PC-3 (cell line): ENCODE measurements at regions of chr12 and their contacts with region 1.

Region 1: GRCh38 chr12:77724367-77724957 is 106.2 kb upstream of the NAV3 start:
- DNase-seq: peak; percentile 60
- ATAC-seq: peak; percentile 62; the same call in 1 of the 2 replicates
- H3K4me3 ChIP-seq: no peak overlapping the region
- H3K27ac ChIP-seq: no peak overlapping the region
- H3K4me1 ChIP-seq: no peaks in the 10 kb centered on the region
- H3K27me3 ChIP-seq: no peaks in the 10 kb centered on the region
- CTCF ChIP-seq: peak; percentile 84

Region 2: DNA sequence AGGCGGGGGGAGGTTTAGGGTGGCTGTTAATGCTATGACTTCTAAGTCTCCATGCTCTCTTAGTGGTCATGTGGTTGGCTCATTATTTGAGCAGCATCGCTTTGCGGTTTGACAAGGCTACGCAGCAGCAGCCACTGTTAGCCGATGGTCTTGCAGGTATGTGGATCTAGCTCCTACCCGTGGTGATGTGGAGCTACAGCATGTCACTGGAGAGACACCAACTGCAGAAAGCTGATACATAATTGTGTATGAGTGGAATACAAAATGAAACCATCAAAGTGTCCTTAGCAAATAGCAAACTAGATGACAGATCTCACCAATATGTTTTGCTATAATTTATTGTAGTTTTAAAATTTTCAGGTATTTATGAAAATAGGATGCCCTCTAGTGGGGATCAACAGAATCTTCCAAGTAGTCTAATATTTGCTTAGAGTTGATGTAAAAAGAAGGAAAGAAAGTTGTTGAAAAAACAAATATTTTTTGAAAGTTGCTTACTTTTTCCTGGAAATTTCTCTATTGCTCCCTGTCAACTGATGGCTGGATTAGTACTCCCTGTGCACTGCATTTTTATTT is 201.2 kb after region 1 on chr12:
- CTCF ChIA-PET with region 1: interaction called, 8 read pairs
- POLR2A ChIA-PET with region 1: no interaction called
- intact Hi-C with region 1: loop called (anchors 1 kb)
- DNase-seq: peak; percentile 90
- ATAC-seq: peak; percentile 100
- H3K4me3 ChIP-seq: no peak overlapping the region
- H3K27ac ChIP-seq: no peak overlapping the region
- H3K4me1 ChIP-seq: no peaks in the 10 kb centered on the region
- H3K27me3 ChIP-seq: peaks cover 26% of the 10 kb centered on the region
- CTCF ChIP-seq: peak; percentile 100

Region 3: GRCh38 chr12:78120866-78121560 is 396.6 kb after region 1 on chr12:
- CTCF ChIA-PET with region 1: no interaction called
- POLR2A ChIA-PET with region 1: no interaction called
- intact Hi-C with region 1: loop called (anchors 10 kb)
- DNase-seq: peak; percentile 64
- ATAC-seq: peak; percentile 49; the same call in 1 of the 2 replicates
- H3K4me3 ChIP-seq: no peak overlapping the region
- H3K27ac ChIP-seq: no peak overlapping the region
- H3K4me1 ChIP-seq: peaks cover 8% of the 10 kb centered on the region
- H3K27me3 ChIP-seq: no peaks in the 10 kb centered on the region
- CTCF ChIP-seq: peak; percentile 77